ENCODE measurements at regions of chr4 and their contacts with region 1.

Region 1: GRCh38 chr4:54395013-54395527 is 166.0 kb downstream of the PDGFRA start:
- DNase-seq: no peak
- H3K4me3 ChIP-seq: no peak overlapping the region
- H3K27ac ChIP-seq: no peak overlapping the region
- H3K27me3 ChIP-seq: peaks cover 0 to 2% (median 0%) of the 10 kb centered on the region in 45 donors
- CTCF ChIP-seq: no peak

Region 2: DNA sequence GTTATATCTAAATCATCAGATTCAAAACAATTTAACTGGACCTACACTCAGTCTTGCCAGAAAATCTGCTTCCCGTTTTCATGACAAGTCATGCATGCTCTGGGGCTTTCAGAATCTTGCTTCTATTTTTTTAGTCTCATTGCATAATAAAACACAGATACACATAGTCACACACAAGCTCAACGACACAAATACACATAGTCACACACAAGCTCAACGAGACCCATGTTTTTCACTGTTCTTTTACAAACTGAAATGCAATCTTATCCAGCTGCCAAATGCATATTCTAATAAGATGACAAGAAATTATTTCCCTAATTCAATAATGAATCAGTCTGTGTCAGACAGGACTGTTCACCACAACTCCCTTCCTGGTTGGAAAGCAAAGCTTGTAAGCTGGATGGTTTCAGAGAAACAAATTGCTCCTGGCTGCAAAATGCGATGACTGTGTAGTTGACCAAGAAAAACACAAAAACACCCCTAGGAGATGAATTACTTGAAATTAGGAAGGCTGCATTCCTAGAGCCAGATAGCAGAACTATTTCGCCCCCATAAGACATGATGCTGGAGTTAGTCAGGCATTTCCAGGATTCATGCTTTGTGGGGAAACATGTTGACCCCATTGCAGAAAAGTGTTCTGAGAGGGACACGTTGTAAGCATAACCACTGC is 539.4 kb before region 1 on chr4:
- intact Hi-C with region 1: no loop called
- DNase-seq: no peak
- H3K4me3 ChIP-seq: no peak overlapping the region
- H3K27ac ChIP-seq: no peak overlapping the region
- H3K27me3 ChIP-seq: peaks cover 0 to 4% (median 0%) of the 10 kb centered on the region in 45 donors
- CTCF ChIP-seq: no peak

Region 3: GRCh38 chr4:54433686-54434085 is 38.6 kb after region 1 on chr4:
- intact Hi-C with region 1: loop called in 1 of 2 experiments (anchors 5 kb)
- DNase-seq: no peak
- H3K4me3 ChIP-seq: no peak overlapping the region
- H3K27ac ChIP-seq: no peak overlapping the region
- H3K27me3 ChIP-seq: peaks cover 0 to 5% (median 0%) of the 10 kb centered on the region in 45 donors
- CTCF ChIP-seq: peak in 50 of 56 donors; percentile 18 to 63 (median 46)